ENCODE measurements at regions of chr1 and their contacts with region 1.

Region 1: DNA sequence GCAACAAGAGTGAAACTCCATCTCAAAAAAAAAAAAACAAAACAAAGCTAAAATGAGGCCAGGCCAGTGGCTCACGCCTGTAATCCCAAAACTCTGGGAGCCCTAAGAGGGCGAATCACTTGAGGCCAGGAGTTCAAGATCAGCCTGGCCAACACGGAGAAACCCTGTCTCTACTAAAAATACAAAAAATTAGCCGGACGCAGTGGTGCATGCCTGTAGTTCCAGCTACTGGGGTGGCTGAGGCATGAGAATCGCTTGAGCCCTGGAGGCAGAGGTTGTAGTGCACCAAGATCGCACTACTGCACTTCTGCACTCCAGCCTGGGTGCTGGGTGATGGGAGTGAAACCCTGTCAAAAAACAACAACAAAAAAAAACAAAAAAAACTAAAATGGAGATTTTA is 191.2 kb upstream of the SGIP1 start:
- DNase-seq: peak; percentile 70
- H3K4me3 ChIP-seq: peak overlapping the region; percentile 51
- H3K27ac ChIP-seq: peak overlapping the region; percentile 47
- H3K4me1 ChIP-seq: peaks cover 75% of the 10 kb centered on the region
- CTCF ChIP-seq: 0 out of 2 replicates have a peak, but pooled peaks have one; percentile 13

Region 2: DNA sequence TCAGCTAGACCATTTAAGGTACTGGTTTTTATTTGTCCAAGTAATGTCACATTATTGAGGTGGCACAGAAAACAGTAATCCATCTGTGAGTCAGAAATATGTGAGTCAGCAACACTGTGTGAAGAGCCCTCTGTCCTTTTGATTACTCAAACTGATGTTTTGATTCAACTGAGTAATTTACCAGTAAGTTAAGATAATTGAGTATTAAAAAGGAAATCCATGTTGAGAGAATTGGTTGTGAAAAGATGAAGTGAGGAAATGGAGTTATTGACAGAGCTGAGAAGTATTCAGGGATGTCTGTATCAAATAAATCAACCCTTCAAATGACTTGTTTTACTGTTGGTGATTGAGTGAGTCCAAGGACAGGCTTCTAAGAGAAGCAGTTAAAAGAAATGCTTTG is 111.5 kb before region 1 on chr1:
- CTCF ChIA-PET with region 1: no interaction called
- POLR2A ChIA-PET with region 1: no interaction called
- intact Hi-C with region 1: no loop called
- DNase-seq: no peak
- H3K4me3 ChIP-seq: no peak overlapping the region
- H3K27ac ChIP-seq: no peak overlapping the region
- H3K4me1 ChIP-seq: no peaks in the 10 kb centered on the region
- CTCF ChIP-seq: no peak

Region 3: GRCh38 chr1:66331657-66332547 is 10.8 kb before region 1 on chr1:
- CTCF ChIA-PET with region 1: interaction called, 4 read pairs
- POLR2A ChIA-PET with region 1: interaction called, 97 read pairs
- intact Hi-C with region 1: no loop called
- DNase-seq: peak; percentile 61
- H3K4me3 ChIP-seq: peak overlapping the region; percentile 77
- H3K27ac ChIP-seq: peak overlapping the region; percentile 93
- H3K4me1 ChIP-seq: peaks cover 71% of the 10 kb centered on the region
- CTCF ChIP-seq: no peak

Region 4: GRCh38 chr1:66360285-66360724 is 17.6 kb after region 1 on chr1:
- CTCF ChIA-PET with region 1: interaction called, 3 read pairs
- POLR2A ChIA-PET with region 1: interaction called, 20 read pairs
- intact Hi-C with region 1: no loop called
- DNase-seq: peak; percentile 56
- H3K4me3 ChIP-seq: no peak overlapping the region
- H3K27ac ChIP-seq: no peak overlapping the region
- H3K4me1 ChIP-seq: peaks cover 16% of the 10 kb centered on the region
- CTCF ChIP-seq: peak; percentile 82

Region 5: DNA sequence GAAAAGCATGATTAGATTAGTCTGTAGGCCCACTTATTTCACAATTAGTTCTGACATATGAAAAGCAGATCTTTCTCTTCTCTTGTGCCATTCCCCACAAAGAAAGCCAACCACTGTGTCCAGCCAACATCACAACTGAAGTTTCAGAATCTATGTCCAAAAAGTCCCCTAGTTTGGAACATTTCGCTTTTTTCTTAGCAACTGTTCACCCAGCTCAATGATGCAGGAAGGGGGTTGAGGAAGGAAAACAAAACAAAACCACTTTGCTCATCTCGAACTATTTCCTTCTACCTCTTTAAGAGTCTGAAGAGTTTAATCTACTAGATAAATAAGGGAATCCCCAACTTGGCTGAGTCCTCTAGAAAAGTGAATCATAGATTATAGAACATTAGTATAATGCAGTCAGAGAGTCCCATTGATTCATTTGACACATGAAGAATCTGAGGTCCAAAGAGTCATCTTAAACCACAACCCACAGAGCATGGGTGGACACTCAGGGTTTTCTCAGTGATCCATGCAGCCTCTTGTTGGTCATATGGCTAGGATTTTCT is 31.9 kb after region 1 on chr1:
- CTCF ChIA-PET with region 1: no interaction called
- POLR2A ChIA-PET with region 1: interaction called, 27 read pairs
- intact Hi-C with region 1: no loop called
- DNase-seq: peak; percentile 41
- H3K4me3 ChIP-seq: peak overlapping the region; percentile 38
- H3K27ac ChIP-seq: peak overlapping the region; percentile 57
- H3K4me1 ChIP-seq: peaks cover 61% of the 10 kb centered on the region
- CTCF ChIP-seq: no peak

Measured in OCI-LY7 (cell line).